ENCODE measurements at regions of chr18 and their contacts with region 1.

Region 1: GRCh38 chr18:55415258-55415871 is 172.6 kb downstream of the TCF4 start:
- DNase-seq: peak; percentile 85 to 92 (median 88)
- ATAC-seq: peak; percentile 85 to 93 (median 88)
- H3K4me3 ChIP-seq: no peak overlapping the region
- H3K27ac ChIP-seq: peak overlapping the region in 7 of 12 donors; percentile 1 to 58 (median 21)
- H3K4me1 ChIP-seq: peaks cover 0 to 67% (median 27%) of the 10 kb centered on the region in 12 donors
- H3K27me3 ChIP-seq: no peaks in the 10 kb centered on the region
- CTCF ChIP-seq: peak; percentile 83 to 97 (median 94)
- POLR2A ChIP-seq: no peak

Region 2: GRCh38 chr18:55343396-55344073 is 71.8 kb before region 1 on chr18:
- intact Hi-C with region 1: loop called in 2 of 10 experiments (anchors 5 to 10 kb)
- DNase-seq: no peak
- ATAC-seq: peak in 3 of 4 donors; percentile 56 to 64 (median 57)
- H3K4me3 ChIP-seq: no peak overlapping the region
- H3K27ac ChIP-seq: peak overlapping the region in 2 of 12 donors; percentile 4 to 21
- H3K4me1 ChIP-seq: peaks cover 0 to 61% (median 17%) of the 10 kb centered on the region in 12 donors
- H3K27me3 ChIP-seq: no peaks in the 10 kb centered on the region
- CTCF ChIP-seq: peak; percentile 38 to 74 (median 58)
- POLR2A ChIP-seq: no peak

Region 3: DNA sequence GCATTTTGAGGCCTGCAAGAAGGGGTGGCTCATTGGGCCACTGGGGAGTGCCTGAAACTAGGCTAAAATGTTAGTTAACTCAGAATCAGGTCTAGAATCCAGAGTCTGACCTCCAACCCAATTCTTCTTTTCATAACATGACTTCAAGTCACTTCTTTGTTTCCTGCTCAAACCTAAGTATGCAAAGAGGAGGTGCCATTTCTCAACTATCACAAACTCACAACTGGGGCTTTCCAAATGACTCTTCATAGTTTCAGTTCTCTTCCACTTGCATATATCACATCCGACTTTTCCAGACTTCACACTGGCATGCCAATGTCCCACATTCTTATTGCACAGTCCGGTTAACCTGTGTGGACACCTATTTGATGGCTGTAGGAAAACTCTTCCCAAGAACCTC is 39.0 kb before region 1 on chr18:
- intact Hi-C with region 1: no loop called
- DNase-seq: no peak
- ATAC-seq: no peak
- H3K4me3 ChIP-seq: no peak overlapping the region
- H3K27ac ChIP-seq: peak overlapping the region in 1 of 12 donors; percentile 57
- H3K4me1 ChIP-seq: peaks cover 0 to 12% (median 0%) of the 10 kb centered on the region in 12 donors
- H3K27me3 ChIP-seq: no peaks in the 10 kb centered on the region
- CTCF ChIP-seq: no peak
- POLR2A ChIP-seq: no peak

Region 4: DNA sequence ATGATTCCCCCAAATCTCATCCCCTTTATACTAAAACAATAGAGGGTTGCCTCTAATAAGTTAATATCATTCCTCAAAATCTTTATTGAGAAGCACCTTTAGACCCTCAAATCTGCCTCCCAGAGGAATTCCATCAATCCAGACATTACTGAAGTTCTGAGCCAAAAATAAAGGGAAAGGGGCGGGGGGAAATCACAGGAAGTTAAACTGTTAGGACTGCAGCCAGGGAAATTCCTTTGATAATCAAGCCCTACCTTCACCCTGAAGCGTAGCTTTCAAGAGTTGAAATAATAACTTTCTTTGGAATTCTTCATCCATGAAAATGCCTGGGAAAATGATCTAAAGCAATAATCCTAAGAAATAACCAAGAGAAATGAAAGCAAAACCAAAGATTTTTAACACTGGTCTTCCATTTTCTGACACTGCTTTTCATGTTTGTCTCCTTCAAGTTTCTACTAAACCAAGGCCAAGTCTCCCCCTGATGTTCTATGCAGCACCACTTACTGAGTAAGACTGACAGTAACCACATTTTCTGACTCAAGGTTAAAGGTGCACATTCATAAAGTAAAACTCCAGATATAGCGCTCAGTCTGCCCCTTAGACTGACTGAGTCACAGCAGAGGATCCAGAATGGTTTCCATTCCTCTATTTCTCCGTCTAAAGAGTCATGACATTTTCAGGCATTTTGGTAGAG is 94.4 kb after region 1 on chr18:
- intact Hi-C with region 1: loop called in 6 of 10 experiments (anchors 5 to 10 kb)
- DNase-seq: peak in 2 of 5 donors; percentile 40 to 63
- ATAC-seq: peak in 2 of 4 donors; percentile 45 to 64
- H3K4me3 ChIP-seq: peak overlapping the region in 11 of 12 donors; percentile 1 to 50 (median 34)
- H3K27ac ChIP-seq: peak overlapping the region; percentile 52 to 94 (median 86)
- H3K4me1 ChIP-seq: peaks cover 0 to 55% (median 18%) of the 10 kb centered on the region in 12 donors
- H3K27me3 ChIP-seq: no peaks in the 10 kb centered on the region
- CTCF ChIP-seq: no peak
- POLR2A ChIP-seq: no peak

Region 5: GRCh38 chr18:55861266-55861665 is 445.9 kb after region 1 on chr18:
- intact Hi-C with region 1: loop called in 2 of 10 experiments (anchors 10 kb)
- DNase-seq: no peak
- ATAC-seq: peak in 1 of 4 donors; percentile 24
- H3K4me3 ChIP-seq: no peak overlapping the region
- H3K27ac ChIP-seq: no peak overlapping the region
- H3K4me1 ChIP-seq: peaks cover 0 to 23% (median 6%) of the 10 kb centered on the region in 12 donors
- H3K27me3 ChIP-seq: no peaks in the 10 kb centered on the region
- CTCF ChIP-seq: peak in 9 of 12 donors; percentile 28 to 57 (median 41)
- POLR2A ChIP-seq: no peak

Region 6: DNA sequence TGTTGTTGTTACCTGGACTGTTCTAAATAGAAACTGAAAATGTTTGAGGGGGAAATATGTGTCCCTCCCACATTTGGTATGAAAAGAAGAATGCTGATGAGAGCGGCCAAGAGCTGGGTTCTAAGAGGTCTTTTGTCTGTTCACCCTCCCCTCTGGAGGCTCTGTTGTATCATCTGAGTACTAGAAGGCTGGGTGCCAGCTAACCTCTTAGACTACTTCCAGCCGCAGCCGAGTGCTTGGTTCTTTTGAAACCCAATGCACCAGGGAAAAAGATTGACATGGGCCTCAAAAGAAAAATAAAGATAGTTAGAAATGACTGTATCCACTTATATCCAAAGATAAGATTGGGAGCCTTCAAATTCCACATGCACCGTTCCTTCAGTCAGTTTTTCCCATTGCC is 967.2 kb after region 1 on chr18:
- intact Hi-C with region 1: loop called in 2 of 10 experiments (anchors 10 kb)
- DNase-seq: peak in 3 of 5 donors; percentile 24 to 39 (median 34)
- ATAC-seq: peak; percentile 44 to 77 (median 50)
- H3K4me3 ChIP-seq: no peak overlapping the region
- H3K27ac ChIP-seq: no peak overlapping the region
- H3K4me1 ChIP-seq: peaks cover 0 to 9% (median 1%) of the 10 kb centered on the region in 12 donors
- H3K27me3 ChIP-seq: no peaks in the 10 kb centered on the region
- CTCF ChIP-seq: no peak
- POLR2A ChIP-seq: no peak

Region 7: GRCh38 chr18:56391931-56392590 is 976.7 kb after region 1 on chr18:
- intact Hi-C with region 1: loop called in 3 of 10 experiments (anchors 10 kb)
- DNase-seq: no peak
- ATAC-seq: no peak
- H3K4me3 ChIP-seq: no peak overlapping the region
- H3K27ac ChIP-seq: no peak overlapping the region
- H3K4me1 ChIP-seq: no peaks in the 10 kb centered on the region
- H3K27me3 ChIP-seq: no peaks in the 10 kb centered on the region
- CTCF ChIP-seq: no peak
- POLR2A ChIP-seq: no peak